Naive thymus-derived CD4-positive, alpha-beta T cell (primary cell): ENCODE measurements at regions of chr21 and their contacts with region 1.

Region 1: GRCh38 chr21:34974162-34974981 is 74.7 kb downstream of the RUNX1 start:
- DNase-seq: peak in 8 of 9 donors; percentile 47 to 81 (median 74)
- ATAC-seq: peak; percentile 91
- H3K4me3 ChIP-seq: peak overlapping the region; percentile 36
- H3K4me3 Mint-ChIP-seq: peak overlapping the region; percentile 78 to 92 (median 86)
- H3K27ac ChIP-seq: peak overlapping the region; percentile 70
- H3K27ac Mint-ChIP-seq: peak overlapping the region; percentile 69 to 98 (median 93)
- H3K4me1 ChIP-seq: peaks cover 49 to 61% of the 10 kb centered on the region in 2 donors
- H3K4me1 Mint-ChIP-seq: peaks cover 65 to 94% (median 89%) of the 10 kb centered on the region in 7 donors
- H3K27me3 ChIP-seq: no peaks in the 10 kb centered on the region
- H3K27me3 Mint-ChIP-seq: peaks cover 0 to 45% (median 0%) of the 10 kb centered on the region in 5 donors

Region 2: DNA sequence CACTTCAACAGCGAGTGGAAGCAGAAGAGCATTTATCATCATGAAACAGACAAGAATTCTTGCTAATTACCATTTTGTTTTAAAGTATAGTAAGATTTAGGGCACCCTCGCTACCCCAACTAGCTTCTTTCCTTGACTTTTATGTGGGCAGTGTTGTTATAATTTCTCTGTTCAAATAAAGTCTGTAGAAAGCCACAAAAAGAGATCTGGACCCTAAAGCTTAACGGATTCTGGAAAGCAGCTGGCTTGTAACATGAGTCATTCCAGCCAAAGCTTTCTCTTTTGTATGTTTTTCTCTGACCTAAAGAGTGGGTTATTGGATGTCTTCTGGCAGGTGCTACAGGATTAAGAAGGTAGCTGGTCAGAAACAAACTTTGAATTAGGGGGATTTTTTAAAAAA is 37.3 kb after region 1 on chr21:
- CTCF ChIA-PET with region 1: no interaction called
- POLR2A ChIA-PET with region 1: no interaction called
- intact Hi-C with region 1: loop called in 1 of 2 experiments (anchors 2 kb)
- DNase-seq: no peak
- ATAC-seq: no peak
- H3K4me3 ChIP-seq: no peak overlapping the region
- H3K4me3 Mint-ChIP-seq: peak overlapping the region; percentile 20 to 79 (median 64)
- H3K27ac ChIP-seq: peak overlapping the region; percentile 28
- H3K27ac Mint-ChIP-seq: peak overlapping the region in 8 of 9 donors; percentile 33 to 85 (median 72)
- H3K4me1 ChIP-seq: peaks cover 36 to 77% of the 10 kb centered on the region in 2 donors
- H3K4me1 Mint-ChIP-seq: peaks cover 58 to 98% (median 96%) of the 10 kb centered on the region in 7 donors
- H3K27me3 ChIP-seq: no peaks in the 10 kb centered on the region
- H3K27me3 Mint-ChIP-seq: no peaks in the 10 kb centered on the region

Region 3: DNA sequence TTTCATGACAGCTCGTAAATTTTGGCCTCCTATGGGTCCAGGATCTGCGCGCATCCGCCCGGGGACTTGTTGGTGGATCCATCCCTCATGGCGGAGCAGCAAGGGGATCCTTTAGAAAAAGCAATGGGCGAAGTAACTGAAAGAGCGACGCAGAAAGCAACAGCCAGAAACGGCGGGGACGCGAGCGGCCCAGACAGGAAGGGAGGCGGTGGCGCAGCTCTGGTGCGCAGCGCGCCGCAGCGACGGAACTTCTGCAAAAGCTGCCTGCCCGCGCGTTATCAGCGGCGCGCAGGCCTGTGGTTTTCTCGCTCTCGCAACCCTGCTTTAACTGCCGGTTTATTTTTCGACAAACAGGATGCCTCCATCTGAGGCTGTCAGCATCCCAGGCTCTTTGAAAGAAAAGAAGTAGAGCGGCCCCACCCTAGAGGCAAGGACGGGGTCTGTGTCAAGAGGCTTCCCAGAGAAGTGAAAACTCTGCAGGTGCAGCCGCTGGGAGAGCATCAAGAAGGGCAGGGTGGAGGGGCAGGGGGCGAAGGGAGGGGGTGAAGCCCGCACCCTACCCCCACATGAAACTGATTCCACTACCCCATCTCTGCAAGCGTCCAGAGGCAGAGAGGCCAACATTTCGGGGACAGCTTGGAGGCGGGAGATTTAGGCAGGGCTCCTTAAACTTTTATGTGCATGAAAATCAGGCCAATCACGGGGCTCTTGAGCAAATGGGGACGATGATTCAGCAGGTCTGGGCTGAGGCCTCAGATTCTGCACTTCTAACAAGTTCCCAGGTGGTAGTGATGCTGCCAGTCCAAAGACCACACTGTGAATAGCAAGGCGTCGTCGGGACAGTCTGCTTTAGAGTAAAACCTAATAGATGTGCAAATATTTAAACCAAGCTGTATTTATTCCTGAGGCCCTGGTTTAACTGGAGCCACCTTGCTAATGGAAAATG is 52.5 kb after region 1 on chr21:
- CTCF ChIA-PET with region 1: no interaction called
- POLR2A ChIA-PET with region 1: interaction called, 7 read pairs
- intact Hi-C with region 1: loop called (anchors 1 kb)
- DNase-seq: peak; percentile 74 to 93 (median 91)
- ATAC-seq: peak; percentile 93
- H3K4me3 ChIP-seq: peak overlapping the region; percentile 45
- H3K4me3 Mint-ChIP-seq: peak overlapping the region; percentile 77 to 98 (median 86)
- H3K27ac ChIP-seq: peak overlapping the region; percentile 75
- H3K27ac Mint-ChIP-seq: peak overlapping the region; percentile 96 to 100 (median 99)
- H3K4me1 ChIP-seq: peaks cover 69 to 85% of the 10 kb centered on the region in 2 donors
- H3K4me1 Mint-ChIP-seq: peaks cover 76 to 98% (median 93%) of the 10 kb centered on the region in 7 donors
- H3K27me3 ChIP-seq: no peaks in the 10 kb centered on the region
- H3K27me3 Mint-ChIP-seq: no peaks in the 10 kb centered on the region

Region 4: DNA sequence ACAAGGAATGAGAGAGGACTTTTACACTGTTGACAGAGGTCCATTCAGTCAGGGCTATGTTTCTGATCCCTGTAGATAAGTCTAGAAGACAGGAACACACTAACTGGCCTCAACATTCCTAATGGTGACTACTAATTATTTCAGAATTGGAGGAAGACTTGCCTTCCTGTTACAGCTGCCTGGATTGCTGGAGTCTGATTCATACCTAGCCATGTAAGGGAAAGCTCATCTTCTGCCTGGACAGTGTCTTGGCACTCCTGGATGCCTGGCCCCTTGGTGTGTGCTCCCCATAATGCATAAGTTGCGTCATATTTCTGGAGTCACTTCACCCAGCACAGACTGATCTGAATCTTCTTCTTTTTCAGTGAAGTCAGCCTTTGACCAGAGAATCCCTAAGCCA is 400.7 kb after region 1 on chr21:
- CTCF ChIA-PET with region 1: no interaction called
- POLR2A ChIA-PET with region 1: no interaction called
- intact Hi-C with region 1: no loop called
- DNase-seq: no peak
- ATAC-seq: no peak
- H3K4me3 ChIP-seq: no peak overlapping the region
- H3K4me3 Mint-ChIP-seq: no peak overlapping the region
- H3K27ac ChIP-seq: no peak overlapping the region
- H3K27ac Mint-ChIP-seq: no peak overlapping the region
- H3K4me1 ChIP-seq: no peaks in the 10 kb centered on the region
- H3K4me1 Mint-ChIP-seq: peaks cover 0 to 5% (median 0%) of the 10 kb centered on the region in 7 donors
- H3K27me3 ChIP-seq: no peaks in the 10 kb centered on the region
- H3K27me3 Mint-ChIP-seq: no peaks in the 10 kb centered on the region

Region 5: DNA sequence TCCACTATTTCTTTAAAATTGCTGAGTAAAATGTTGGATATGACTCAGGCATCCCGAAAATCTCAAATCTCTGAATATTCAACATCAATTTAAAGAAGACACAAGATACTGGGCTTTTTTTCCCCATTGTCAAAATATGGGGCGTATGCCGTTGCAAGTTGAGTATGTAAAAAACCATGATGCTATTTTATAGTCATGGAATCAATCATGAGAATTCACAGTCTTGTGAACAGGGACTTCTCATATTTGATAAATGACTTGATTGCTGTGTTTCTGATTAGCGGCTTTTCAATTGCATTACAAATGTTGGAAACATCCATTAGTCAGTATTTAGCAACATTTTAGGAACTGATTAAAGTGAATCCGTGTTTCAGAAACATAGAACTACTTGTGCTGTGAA is 1040.7 kb after region 1 on chr21:
- CTCF ChIA-PET with region 1: no interaction called
- POLR2A ChIA-PET with region 1: no interaction called
- intact Hi-C with region 1: no loop called
- DNase-seq: no peak
- ATAC-seq: no peak
- H3K4me3 ChIP-seq: no peak overlapping the region
- H3K4me3 Mint-ChIP-seq: no peak overlapping the region
- H3K27ac ChIP-seq: no peak overlapping the region
- H3K27ac Mint-ChIP-seq: no peak overlapping the region
- H3K4me1 ChIP-seq: no peaks in the 10 kb centered on the region
- H3K4me1 Mint-ChIP-seq: peaks cover 0 to 1% (median 0%) of the 10 kb centered on the region in 7 donors
- H3K27me3 ChIP-seq: no peaks in the 10 kb centered on the region
- H3K27me3 Mint-ChIP-seq: peaks cover 0 to 16% (median 6%) of the 10 kb centered on the region in 5 donors